ENCODE measurements at regions of chr2 and their contacts with region 1.

Region 1: DNA sequence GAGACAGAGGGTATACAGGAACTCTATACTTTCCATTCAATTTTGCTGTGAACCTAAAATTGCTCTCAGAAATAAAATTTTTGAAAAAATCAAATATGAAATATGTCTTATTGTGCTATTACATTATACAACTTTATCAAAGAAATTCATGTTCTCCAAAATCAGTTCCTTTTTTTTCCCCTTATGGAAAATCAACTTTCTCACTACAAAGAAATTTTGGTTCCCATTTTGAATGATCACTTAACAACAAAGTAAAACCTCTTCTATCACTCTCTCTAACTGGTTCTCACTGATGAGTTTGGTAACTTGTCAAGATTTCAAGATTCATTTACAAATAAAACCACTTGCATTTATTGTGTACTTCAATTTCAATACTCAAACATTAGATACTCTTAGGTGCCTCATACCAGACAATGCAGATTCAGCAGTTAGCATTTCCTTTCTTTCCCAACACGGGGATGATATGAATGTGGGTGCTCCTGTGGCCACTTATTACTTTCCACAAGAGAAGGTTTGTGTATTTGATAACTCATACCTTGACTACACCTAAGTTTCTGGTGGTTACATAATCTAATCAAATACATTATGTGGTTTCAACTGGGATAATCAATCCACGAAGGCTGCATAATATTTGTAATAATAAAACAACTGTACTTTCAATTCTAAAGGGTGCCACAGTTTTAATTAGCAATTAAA is 6.4 kb downstream of the PSME4 start:
- DNase-seq: no peak
- H3K4me3 ChIP-seq: no peak overlapping the region
- H3K27ac ChIP-seq: no peak overlapping the region
- H3K4me1 ChIP-seq: peaks cover 27% of the 10 kb centered on the region
- H3K27me3 ChIP-seq: no peaks in the 10 kb centered on the region
- CTCF ChIP-seq: no peak

Region 2: GRCh38 chr2:53188851-53189510 is 775.4 kb before region 1 on chr2:
- CTCF ChIA-PET with region 1: no interaction called
- POLR2A ChIA-PET with region 1: interaction called, 24 read pairs
- intact Hi-C with region 1: no loop called
- DNase-seq: no peak
- H3K4me3 ChIP-seq: no peak overlapping the region
- H3K27ac ChIP-seq: no peak overlapping the region
- H3K4me1 ChIP-seq: no peaks in the 10 kb centered on the region
- H3K27me3 ChIP-seq: no peaks in the 10 kb centered on the region
- CTCF ChIP-seq: no peak

Region 3: DNA sequence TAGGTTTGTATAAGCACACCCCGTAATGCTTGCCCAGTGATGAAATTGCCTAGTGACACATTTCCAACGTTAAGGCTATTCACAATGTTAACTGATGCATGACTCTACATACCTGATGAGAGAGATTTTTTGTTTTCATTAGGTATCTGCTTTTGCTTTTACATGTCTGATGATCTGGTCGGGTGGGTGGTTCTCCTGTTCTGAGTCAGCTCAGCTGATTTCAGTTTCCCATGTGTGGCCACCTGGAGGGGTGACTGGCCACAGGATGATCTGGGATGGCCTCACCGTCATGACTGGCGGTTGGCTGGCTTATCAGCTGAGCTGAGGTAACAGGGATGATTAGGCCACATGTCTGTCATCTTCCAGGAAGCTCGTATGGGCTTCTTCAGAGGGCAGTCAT is 117.2 kb after region 1 on chr2:
- CTCF ChIA-PET with region 1: no interaction called
- POLR2A ChIA-PET with region 1: no interaction called
- intact Hi-C with region 1: no loop called
- DNase-seq: no peak
- H3K4me3 ChIP-seq: no peak overlapping the region
- H3K27ac ChIP-seq: no peak overlapping the region
- H3K4me1 ChIP-seq: no peaks in the 10 kb centered on the region
- H3K27me3 ChIP-seq: no peaks in the 10 kb centered on the region
- CTCF ChIP-seq: no peak

Region 4: DNA sequence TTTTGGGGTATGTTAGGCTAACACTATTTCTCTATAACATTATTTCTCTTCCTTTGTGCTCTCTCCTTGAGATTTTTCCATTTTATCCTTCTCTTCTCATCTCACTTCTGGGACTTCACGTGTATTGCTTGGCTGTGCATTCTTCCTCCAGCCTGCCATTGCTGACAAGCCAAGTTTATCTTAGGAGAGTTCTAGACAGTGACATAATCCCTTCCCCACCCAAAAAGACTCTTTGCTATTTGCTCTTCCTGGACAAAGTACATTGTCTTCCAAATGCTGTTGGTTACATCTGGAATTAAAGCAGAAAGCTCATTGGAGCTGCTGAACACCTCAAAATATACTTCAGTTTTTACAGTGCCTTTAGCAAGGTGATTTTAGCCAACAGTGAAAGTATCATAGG is 282.7 kb after region 1 on chr2:
- CTCF ChIA-PET with region 1: no interaction called
- POLR2A ChIA-PET with region 1: no interaction called
- intact Hi-C with region 1: no loop called
- DNase-seq: no peak
- H3K4me3 ChIP-seq: no peak overlapping the region
- H3K27ac ChIP-seq: no peak overlapping the region
- H3K4me1 ChIP-seq: no peaks in the 10 kb centered on the region
- H3K27me3 ChIP-seq: no peaks in the 10 kb centered on the region
- CTCF ChIP-seq: no peak

Region 5: GRCh38 chr2:54274781-54275242 is 310.4 kb after region 1 on chr2:
- CTCF ChIA-PET with region 1: no interaction called
- POLR2A ChIA-PET with region 1: no interaction called
- intact Hi-C with region 1: no loop called
- DNase-seq: no peak
- H3K4me3 ChIP-seq: no peak overlapping the region
- H3K27ac ChIP-seq: peak overlapping the region; percentile 46
- H3K4me1 ChIP-seq: peaks cover 11% of the 10 kb centered on the region; the same call in 1 of the 2 replicates
- H3K27me3 ChIP-seq: no peaks in the 10 kb centered on the region
- CTCF ChIP-seq: no peak